ENCODE measurements at regions of chr2 and their contacts with region 1.

Region 1: DNA sequence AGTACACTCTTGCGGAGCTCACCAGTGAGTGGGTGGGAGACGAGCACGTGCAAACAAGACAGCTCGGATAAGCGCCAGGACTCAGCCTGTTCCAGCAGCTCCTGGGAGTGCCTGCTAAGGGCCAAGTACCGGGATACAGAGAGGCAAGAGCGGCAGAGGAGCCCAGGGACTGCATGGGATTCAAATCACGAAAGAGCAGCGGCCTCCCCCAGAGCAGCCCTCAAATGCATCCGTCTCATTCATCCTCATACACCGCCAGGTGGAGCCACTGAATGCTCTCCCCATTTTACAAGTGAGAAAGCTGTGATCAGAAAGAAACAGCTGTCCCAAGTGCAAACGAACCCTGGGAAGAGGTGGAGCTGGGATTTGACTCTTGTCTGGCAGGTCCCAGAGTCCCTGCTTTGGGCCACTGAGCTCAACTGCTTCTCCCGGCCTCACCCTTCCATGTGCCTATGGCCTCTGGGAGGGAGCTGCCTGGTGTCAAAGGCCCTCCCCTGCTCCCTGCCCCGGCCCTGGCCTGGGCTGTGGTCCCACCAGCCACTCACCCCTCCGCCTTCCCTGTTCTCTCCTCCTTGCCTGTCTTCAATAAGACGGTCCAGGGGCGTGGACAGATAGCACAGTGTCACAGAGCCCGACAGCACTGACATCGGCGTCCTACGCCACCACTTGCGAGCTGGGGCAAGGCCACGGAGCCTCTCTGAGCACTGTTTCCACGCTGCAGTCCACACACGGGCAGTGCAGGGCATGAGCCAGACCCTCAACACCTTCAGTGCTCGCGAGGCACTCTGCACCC is 72.8 kb upstream of the TAF1B start:
- DNase-seq: peak; percentile 77
- ATAC-seq: peak; percentile 67
- H3K4me3 Mint-ChIP-seq: no peak overlapping the region
- H3K27ac Mint-ChIP-seq: no peak overlapping the region
- H3K4me1 Mint-ChIP-seq: peaks cover 45% of the 10 kb centered on the region
- H3K27me3 Mint-ChIP-seq: no peaks in the 10 kb centered on the region; the same call in 1 of the 2 replicates
- CTCF ChIP-seq: peak; percentile 31; the same call in 1 of the 2 replicates

Region 2: DNA sequence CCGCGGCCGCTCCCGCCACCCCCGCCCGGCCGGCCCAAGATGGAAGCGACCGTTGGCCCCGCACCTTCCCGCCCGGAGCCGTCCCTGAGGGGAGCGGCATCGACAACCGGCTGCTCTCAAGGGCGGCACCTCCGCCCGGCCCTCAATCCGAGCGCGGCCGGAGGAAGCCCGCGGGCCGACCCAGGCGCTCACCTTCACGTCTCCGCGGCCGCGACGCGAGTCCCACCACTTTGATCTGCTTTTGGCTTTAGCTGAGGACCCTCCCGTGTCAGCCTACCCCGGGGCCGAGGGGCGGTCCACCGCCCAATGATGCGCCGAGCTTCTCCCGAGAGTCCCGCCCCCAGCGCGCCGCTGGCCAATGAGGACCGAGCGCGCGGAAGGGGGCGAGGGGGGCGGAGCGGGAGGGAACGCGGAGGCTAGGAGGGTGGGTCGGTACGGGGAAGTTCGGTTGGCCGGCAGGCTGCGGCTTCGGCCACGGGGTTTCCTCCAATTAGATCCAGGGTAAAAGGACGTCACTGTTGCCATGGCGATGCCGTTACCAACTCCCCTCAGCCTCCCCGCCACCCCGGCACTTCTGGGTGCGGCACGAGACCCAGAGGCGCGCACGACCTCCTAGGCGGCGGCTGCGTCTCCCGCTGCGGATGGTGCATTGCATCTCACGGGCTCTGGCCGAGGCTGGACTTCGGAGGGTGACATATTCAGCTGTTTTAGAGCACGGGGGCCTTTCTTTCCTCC is 139.6 kb before region 1 on chr2 and contains the start of gene YWHAQ:
- CTCF ChIA-PET with region 1: interaction called, 14 read pairs
- POLR2A ChIA-PET with region 1: interaction called, 9 read pairs
- DNase-seq: peak; percentile 98
- ATAC-seq: peak; percentile 93
- H3K4me3 Mint-ChIP-seq: peak within 1 kb of the TSS; percentile 98
- H3K27ac Mint-ChIP-seq: peak within 1 kb of the TSS; percentile 99
- H3K4me1 Mint-ChIP-seq: peaks cover 44% of the 10 kb centered on the region
- H3K27me3 Mint-ChIP-seq: peaks cover 30% of the 10 kb centered on the region
- CTCF ChIP-seq: no peak
- total RNA-seq, gene YWHAQ: 394 to 395 TPM (median 395 TPM) in 3 replicates

Region 3: DNA sequence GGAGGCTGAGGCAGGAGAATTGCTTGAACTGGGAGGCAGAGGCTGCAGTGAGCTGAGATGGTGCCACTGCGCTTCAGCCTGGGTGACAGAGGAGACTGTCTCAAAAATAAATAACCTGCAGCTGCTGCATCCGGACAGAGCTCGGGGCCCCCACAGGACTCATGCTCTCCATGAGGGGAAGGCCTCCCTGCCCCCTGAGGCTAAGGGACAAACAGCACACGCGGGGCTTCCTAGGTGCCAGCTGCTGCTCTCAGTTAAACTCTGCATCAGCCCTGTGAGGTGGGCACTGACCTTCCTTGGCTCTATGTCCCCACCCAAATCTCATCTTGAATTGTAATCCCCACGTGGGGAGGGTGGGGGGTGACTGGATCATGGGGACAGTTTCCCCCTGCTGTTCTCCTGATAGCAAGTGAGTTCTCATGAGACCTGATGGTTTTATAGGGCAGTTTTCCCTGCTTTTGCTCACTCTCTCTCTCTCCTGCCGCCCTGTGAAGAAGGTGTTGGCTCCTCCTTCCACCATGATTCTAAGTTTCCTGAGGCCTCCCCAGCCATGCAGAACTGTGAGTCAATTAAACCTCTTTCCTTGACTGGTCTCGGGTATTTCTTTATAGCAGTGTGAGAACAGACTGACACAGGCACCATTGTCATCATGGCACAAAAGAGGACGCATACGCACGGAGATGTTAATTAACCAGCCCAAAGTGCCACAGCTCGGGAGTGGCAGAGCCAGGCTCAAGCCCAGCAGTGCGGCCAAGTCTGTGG is 22.8 kb after region 1 on chr2:
- CTCF ChIA-PET with region 1: interaction called, 130 read pairs
- POLR2A ChIA-PET with region 1: no interaction called
- DNase-seq: no peak
- ATAC-seq: no peak
- H3K4me3 Mint-ChIP-seq: no peak overlapping the region
- H3K27ac Mint-ChIP-seq: no peak overlapping the region
- H3K4me1 Mint-ChIP-seq: peaks cover 11% of the 10 kb centered on the region
- H3K27me3 Mint-ChIP-seq: peaks cover 4% of the 10 kb centered on the region
- CTCF ChIP-seq: no peak

Region 4: GRCh38 chr2:9843229-9844035 is 72.9 kb after region 1 on chr2 and contains the start of gene TAF1B:
- CTCF ChIA-PET with region 1: interaction called, 13 read pairs
- POLR2A ChIA-PET with region 1: no interaction called
- DNase-seq: peak; percentile 90
- ATAC-seq: peak; percentile 92
- H3K4me3 Mint-ChIP-seq: peak within 1 kb of the TSS; percentile 86
- H3K27ac Mint-ChIP-seq: peak within 1 kb of the TSS; percentile 96
- H3K4me1 Mint-ChIP-seq: peaks cover 19% of the 10 kb centered on the region
- H3K27me3 Mint-ChIP-seq: peaks cover 4% of the 10 kb centered on the region; the same call in 1 of the 2 replicates
- CTCF ChIP-seq: no peak
- total RNA-seq, gene TAF1B: 27.0 to 31.2 TPM (median 28.8 TPM) in 3 replicates

Region 5: GRCh38 chr2:10072656-10073480 is 302.4 kb after region 1 on chr2:
- CTCF ChIA-PET with region 1: interaction called, 16 read pairs
- POLR2A ChIA-PET with region 1: no interaction called
- DNase-seq: peak; percentile 83
- ATAC-seq: peak; percentile 97
- H3K4me3 Mint-ChIP-seq: no peak overlapping the region
- H3K27ac Mint-ChIP-seq: no peak overlapping the region
- H3K4me1 Mint-ChIP-seq: peaks cover 18% of the 10 kb centered on the region
- H3K27me3 Mint-ChIP-seq: peaks cover 14% of the 10 kb centered on the region
- CTCF ChIP-seq: peak; percentile 89